Activated CD8-positive, alpha-beta T cell treated with anti-CD3 and anti-CD28 coated beads for 36 hours (primary cell): ENCODE measurements at regions of chr1 and their contacts with region 1.

Region 1: GRCh38 chr1:21368515-21369289 is 71.2 kb upstream of the NBPF3 start:
- DNase-seq: peak; percentile 57
- ATAC-seq: peak; percentile 68
- H3K4me3 Mint-ChIP-seq: no peak overlapping the region
- H3K27ac Mint-ChIP-seq: no peak overlapping the region
- H3K4me1 Mint-ChIP-seq: peaks cover 8% of the 10 kb centered on the region
- H3K27me3 Mint-ChIP-seq: no peaks in the 10 kb centered on the region
- CTCF ChIP-seq: peak; percentile 99

Region 2: DNA sequence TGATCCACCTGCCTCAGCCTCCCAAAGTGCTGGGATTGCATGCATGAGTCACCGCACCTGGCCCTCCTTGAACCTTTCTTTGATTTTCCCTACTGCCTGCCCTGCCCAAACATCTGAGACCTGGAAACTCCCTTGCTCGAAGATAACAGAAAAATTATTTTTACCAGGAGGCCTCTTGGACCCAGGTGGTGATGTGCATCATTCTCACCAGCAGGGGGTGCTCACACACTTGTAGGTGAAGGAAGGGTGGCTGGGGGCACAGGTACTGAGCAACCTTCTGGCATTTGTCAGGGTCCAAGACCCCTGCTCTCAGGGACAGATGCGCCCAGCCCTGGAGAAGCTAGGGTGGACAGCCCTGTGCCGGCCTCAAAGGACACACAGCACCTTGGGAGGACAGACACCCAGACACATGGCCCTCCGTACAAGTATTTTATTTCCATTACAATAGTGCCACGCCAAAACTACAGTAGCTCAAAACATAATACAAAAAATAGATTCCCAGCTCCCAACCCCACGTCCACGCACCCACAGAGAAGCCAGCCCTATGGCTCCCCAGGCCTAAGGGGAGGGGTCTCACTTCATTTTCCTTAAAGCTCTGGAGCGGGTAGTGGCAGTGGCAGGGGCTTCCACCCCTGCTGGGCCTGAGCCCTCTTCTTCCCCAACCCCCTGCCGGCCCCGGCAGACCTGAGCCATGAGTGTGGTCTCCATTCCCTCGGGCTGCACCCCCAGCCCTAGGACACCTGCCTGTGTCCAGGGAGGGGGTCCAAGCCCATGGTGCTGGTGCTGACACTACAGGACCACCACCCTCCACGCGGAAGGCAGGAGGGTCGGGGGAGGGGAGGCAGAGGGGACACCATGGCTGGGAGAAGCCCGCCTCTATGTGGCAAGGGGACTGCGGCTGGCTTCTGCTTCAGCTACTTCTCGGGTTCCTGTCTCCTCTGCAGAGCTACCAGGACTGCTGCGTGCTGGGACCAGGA is 151.6 kb before region 1 on chr1:
- CTCF ChIA-PET with region 1: interaction called, 53 read pairs
- POLR2A ChIA-PET with region 1: interaction called, 5 read pairs
- intact Hi-C with region 1: loop called (anchors 2 kb)
- DNase-seq: peak; percentile 86
- ATAC-seq: peak; percentile 74
- H3K4me3 Mint-ChIP-seq: no peak overlapping the region
- H3K27ac Mint-ChIP-seq: no peak overlapping the region
- H3K4me1 Mint-ChIP-seq: peaks cover 2% of the 10 kb centered on the region
- H3K27me3 Mint-ChIP-seq: no peaks in the 10 kb centered on the region
- CTCF ChIP-seq: peak; percentile 84

Region 3: DNA sequence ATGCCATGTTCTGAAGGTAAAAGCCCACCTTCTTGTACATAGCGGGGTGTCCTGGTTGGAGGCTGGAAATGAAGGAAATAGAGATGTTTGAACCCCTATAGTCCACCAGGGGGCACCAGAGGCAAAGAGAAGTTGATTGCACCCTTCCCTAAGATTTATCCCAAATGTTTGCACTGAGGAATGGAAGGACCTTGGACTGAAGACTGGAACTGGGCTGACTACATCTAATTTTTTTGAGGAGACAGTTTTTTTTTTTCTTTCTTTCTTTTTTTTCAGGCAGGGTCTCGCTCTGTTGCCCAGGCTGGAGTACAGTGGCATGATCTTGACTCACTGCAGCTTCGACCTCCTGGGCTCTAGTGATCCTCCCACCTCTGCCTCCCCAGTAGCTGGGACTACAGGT is 136.7 kb before region 1 on chr1:
- CTCF ChIA-PET with region 1: interaction called, 78 read pairs
- POLR2A ChIA-PET with region 1: interaction called, 4 read pairs
- intact Hi-C with region 1: loop called (anchors 5 kb)
- DNase-seq: peak; percentile 38
- ATAC-seq: peak; percentile 64
- H3K4me3 Mint-ChIP-seq: no peak overlapping the region
- H3K27ac Mint-ChIP-seq: no peak overlapping the region
- H3K4me1 Mint-ChIP-seq: no peaks in the 10 kb centered on the region
- H3K27me3 Mint-ChIP-seq: no peaks in the 10 kb centered on the region
- CTCF ChIP-seq: peak; percentile 99

Region 4: GRCh38 chr1:21255278-21255942 is 113.3 kb before region 1 on chr1:
- CTCF ChIA-PET with region 1: interaction called, 187 read pairs
- POLR2A ChIA-PET with region 1: interaction called, 5 read pairs
- intact Hi-C with region 1: loop called (anchors 2 kb)
- DNase-seq: peak; percentile 92
- ATAC-seq: peak; percentile 45
- H3K4me3 Mint-ChIP-seq: no peak overlapping the region
- H3K27ac Mint-ChIP-seq: peak overlapping the region; percentile 87
- H3K4me1 Mint-ChIP-seq: peaks cover 58% of the 10 kb centered on the region
- H3K27me3 Mint-ChIP-seq: no peaks in the 10 kb centered on the region
- CTCF ChIP-seq: peak; percentile 85

Region 5: GRCh38 chr1:21270086-21270689 is 98.5 kb before region 1 on chr1:
- CTCF ChIA-PET with region 1: interaction called, 31 read pairs
- POLR2A ChIA-PET with region 1: interaction called, 3 read pairs
- intact Hi-C with region 1: no loop called
- DNase-seq: peak; percentile 90
- ATAC-seq: peak; percentile 95
- H3K4me3 Mint-ChIP-seq: no peak overlapping the region
- H3K27ac Mint-ChIP-seq: peak overlapping the region; percentile 63
- H3K4me1 Mint-ChIP-seq: peaks cover 30% of the 10 kb centered on the region
- H3K27me3 Mint-ChIP-seq: no peaks in the 10 kb centered on the region
- CTCF ChIP-seq: peak; percentile 98

Region 6: GRCh38 chr1:21334214-21335087 is 34.3 kb before region 1 on chr1:
- CTCF ChIA-PET with region 1: interaction called, 17 read pairs
- POLR2A ChIA-PET with region 1: no interaction called
- intact Hi-C with region 1: no loop called
- DNase-seq: peak; percentile 90
- ATAC-seq: peak; percentile 90
- H3K4me3 Mint-ChIP-seq: peak overlapping the region; percentile 76
- H3K27ac Mint-ChIP-seq: peak overlapping the region; percentile 96
- H3K4me1 Mint-ChIP-seq: peaks cover 87% of the 10 kb centered on the region
- H3K27me3 Mint-ChIP-seq: no peaks in the 10 kb centered on the region
- CTCF ChIP-seq: peak; percentile 83

Region 7: GRCh38 chr1:21378705-21379494 is 10.2 kb after region 1 on chr1:
- CTCF ChIA-PET with region 1: interaction called, 13 read pairs
- POLR2A ChIA-PET with region 1: no interaction called
- intact Hi-C with region 1: no loop called
- DNase-seq: no peak
- ATAC-seq: no peak
- H3K4me3 Mint-ChIP-seq: no peak overlapping the region
- H3K27ac Mint-ChIP-seq: no peak overlapping the region
- H3K4me1 Mint-ChIP-seq: peaks cover 3% of the 10 kb centered on the region
- H3K27me3 Mint-ChIP-seq: peaks cover 5% of the 10 kb centered on the region
- CTCF ChIP-seq: no peak